Head of caudate nucleus (tissue), 42 donors: ENCODE measurements at regions of chr19 and their contacts with region 1.

Region 1: GRCh38 chr19:56507446-56508289 is at the start of gene ZNF471:
- DNase-seq: peak; percentile 97 to 100 (median 99)

Region 2: GRCh38 chr19:56191115-56191514 is 316.6 kb before region 1 on chr19:
- intact Hi-C with region 1: no loop called
- DNase-seq: no peak

Region 3: GRCh38 chr19:56477429-56478338 is 30.0 kb before region 1 on chr19:
- intact Hi-C with region 1: loop called (anchors 2 kb)
- DNase-seq: peak; percentile 87 to 98 (median 94)

Region 4: DNA sequence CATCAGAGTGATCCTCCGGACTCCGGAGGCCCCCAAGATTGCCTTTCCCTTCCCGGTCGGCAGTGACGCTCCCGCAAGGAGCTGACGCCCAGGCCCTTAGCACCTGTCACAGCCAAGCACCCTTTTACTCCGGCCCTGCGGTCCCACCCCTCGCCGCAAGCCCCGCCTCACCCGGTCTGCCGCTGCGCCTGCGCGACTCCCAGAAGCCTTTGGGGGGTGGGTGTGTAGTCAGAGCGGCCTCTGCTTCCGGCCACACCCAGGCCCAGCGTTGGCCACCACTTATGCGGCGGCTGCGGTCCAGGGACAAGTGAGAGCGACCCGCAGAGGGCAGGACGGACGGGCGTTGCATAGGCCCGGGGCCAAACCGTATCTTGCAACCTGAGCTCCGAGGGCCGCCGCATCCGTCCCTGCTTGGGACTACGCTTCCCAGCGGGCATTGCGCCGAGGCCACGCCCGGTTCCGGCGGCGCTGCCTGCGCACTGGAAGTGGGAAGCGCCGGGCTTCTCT is 30.6 kb after region 1 on chr19:
- intact Hi-C with region 1: loop called (anchors 1 kb)
- DNase-seq: peak; percentile 84 to 99 (median 96)

Region 5: GRCh38 chr19:56601375-56601774 is 93.7 kb after region 1 on chr19:
- intact Hi-C with region 1: no loop called
- DNase-seq: no peak